ENCODE measurements at regions of chr3 and their contacts with region 1.

Region 1: GRCh38 chr3:26712211-26713026 is 89.8 kb downstream of the LRRC3B start:
- DNase-seq: peak in 3 of 9 donors; percentile 0 to 3 (median 3)
- ATAC-seq: no peak
- H3K4me3 ChIP-seq: no peak overlapping the region
- H3K4me3 Mint-ChIP-seq: no peak overlapping the region
- H3K27ac ChIP-seq: no peak overlapping the region
- H3K27ac Mint-ChIP-seq: no peak overlapping the region
- H3K4me1 ChIP-seq: no peaks in the 10 kb centered on the region
- H3K4me1 Mint-ChIP-seq: no peaks in the 10 kb centered on the region
- H3K27me3 ChIP-seq: no peaks in the 10 kb centered on the region
- H3K27me3 Mint-ChIP-seq: no peaks in the 10 kb centered on the region

Region 2: DNA sequence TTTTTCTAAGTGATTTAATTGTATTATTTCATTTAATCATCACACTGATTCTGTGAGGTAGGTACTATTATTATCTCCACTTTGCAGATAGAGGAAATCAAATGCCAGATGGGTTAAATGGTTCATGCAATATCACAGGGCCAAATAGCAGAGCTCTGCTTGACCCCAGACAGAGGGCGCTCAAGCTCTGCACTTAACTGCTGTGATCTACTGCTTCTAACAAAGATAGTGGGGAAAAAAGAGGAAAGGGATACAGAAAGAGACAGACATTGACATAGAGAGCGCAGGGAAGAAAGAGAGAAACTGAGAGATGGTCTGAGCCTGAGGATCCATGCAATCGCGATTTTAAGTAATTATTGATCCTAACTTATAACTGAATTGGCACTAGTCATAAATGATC is 1938.6 kb before region 1 on chr3:
- CTCF ChIA-PET with region 1: no interaction called
- POLR2A ChIA-PET with region 1: no interaction called
- intact Hi-C with region 1: loop called in 1 of 2 experiments (anchors 10 kb)
- DNase-seq: no peak
- ATAC-seq: no peak
- H3K4me3 ChIP-seq: no peak overlapping the region
- H3K4me3 Mint-ChIP-seq: no peak overlapping the region
- H3K27ac ChIP-seq: no peak overlapping the region
- H3K27ac Mint-ChIP-seq: no peak overlapping the region
- H3K4me1 ChIP-seq: no peaks in the 10 kb centered on the region
- H3K4me1 Mint-ChIP-seq: no peaks in the 10 kb centered on the region
- H3K27me3 ChIP-seq: no peaks in the 10 kb centered on the region
- H3K27me3 Mint-ChIP-seq: no peaks in the 10 kb centered on the region

Region 3: DNA sequence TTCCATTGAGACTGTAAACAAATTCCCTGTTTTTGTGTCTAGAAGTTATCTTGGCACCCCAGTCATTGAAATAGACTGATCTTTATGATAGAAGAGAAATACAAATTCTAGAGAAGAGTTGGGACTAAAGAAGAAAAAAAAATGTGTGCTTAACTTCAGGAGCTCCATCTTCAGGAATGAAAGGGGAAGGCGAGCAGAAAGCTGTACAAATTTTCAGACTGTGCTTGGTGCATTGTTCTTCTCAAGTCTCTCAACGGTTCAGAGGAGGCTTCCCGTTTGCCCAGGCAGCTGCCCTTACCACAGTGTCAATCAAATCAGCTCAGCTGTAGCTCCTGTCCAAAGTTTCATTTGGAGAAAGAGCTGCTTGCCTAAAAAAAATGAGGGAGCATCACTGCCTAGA is 880.8 kb before region 1 on chr3:
- CTCF ChIA-PET with region 1: no interaction called
- POLR2A ChIA-PET with region 1: no interaction called
- intact Hi-C with region 1: loop called in 1 of 2 experiments (anchors 5 kb)
- DNase-seq: no peak
- ATAC-seq: no peak
- H3K4me3 ChIP-seq: no peak overlapping the region
- H3K4me3 Mint-ChIP-seq: no peak overlapping the region
- H3K27ac ChIP-seq: no peak overlapping the region
- H3K27ac Mint-ChIP-seq: peak overlapping the region in 1 of 9 donors; percentile 23
- H3K4me1 ChIP-seq: no peaks in the 10 kb centered on the region
- H3K4me1 Mint-ChIP-seq: peaks cover 0 to 8% (median 4%) of the 10 kb centered on the region in 7 donors
- H3K27me3 ChIP-seq: no peaks in the 10 kb centered on the region
- H3K27me3 Mint-ChIP-seq: peaks cover 5 to 19% (median 7%) of the 10 kb centered on the region in 5 donors

Region 4: DNA sequence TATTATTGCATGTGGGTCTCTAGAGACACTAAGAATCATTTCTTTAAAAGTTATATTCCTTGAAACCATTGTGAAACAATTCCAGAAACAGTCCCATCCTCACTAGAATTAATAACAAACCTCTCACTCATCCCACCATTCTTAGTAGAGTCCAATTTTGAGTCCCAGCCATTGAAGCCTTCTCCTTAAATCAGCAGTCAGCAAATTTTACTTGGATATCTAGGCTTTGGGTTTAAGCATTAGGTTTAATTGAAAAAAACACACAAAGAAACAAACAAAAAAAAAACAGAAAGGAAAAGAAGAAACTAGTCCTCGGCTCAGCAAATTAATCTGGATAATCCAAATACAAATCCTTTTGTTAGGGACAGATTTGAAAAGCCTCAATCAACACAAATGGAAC is 19.4 kb after region 1 on chr3:
- CTCF ChIA-PET with region 1: no interaction called
- POLR2A ChIA-PET with region 1: no interaction called
- intact Hi-C with region 1: no loop called
- DNase-seq: no peak
- ATAC-seq: no peak
- H3K4me3 ChIP-seq: no peak overlapping the region
- H3K4me3 Mint-ChIP-seq: no peak overlapping the region
- H3K27ac ChIP-seq: no peak overlapping the region
- H3K27ac Mint-ChIP-seq: no peak overlapping the region
- H3K4me1 ChIP-seq: no peaks in the 10 kb centered on the region
- H3K4me1 Mint-ChIP-seq: no peaks in the 10 kb centered on the region
- H3K27me3 ChIP-seq: no peaks in the 10 kb centered on the region
- H3K27me3 Mint-ChIP-seq: no peaks in the 10 kb centered on the region